ENCODE measurements at regions of chr1 and their contacts with region 1.

Region 1: GRCh38 chr1:226723657-226724532 is 15.2 kb downstream of the ITPKB start:
- DNase-seq: no peak

Region 2: DNA sequence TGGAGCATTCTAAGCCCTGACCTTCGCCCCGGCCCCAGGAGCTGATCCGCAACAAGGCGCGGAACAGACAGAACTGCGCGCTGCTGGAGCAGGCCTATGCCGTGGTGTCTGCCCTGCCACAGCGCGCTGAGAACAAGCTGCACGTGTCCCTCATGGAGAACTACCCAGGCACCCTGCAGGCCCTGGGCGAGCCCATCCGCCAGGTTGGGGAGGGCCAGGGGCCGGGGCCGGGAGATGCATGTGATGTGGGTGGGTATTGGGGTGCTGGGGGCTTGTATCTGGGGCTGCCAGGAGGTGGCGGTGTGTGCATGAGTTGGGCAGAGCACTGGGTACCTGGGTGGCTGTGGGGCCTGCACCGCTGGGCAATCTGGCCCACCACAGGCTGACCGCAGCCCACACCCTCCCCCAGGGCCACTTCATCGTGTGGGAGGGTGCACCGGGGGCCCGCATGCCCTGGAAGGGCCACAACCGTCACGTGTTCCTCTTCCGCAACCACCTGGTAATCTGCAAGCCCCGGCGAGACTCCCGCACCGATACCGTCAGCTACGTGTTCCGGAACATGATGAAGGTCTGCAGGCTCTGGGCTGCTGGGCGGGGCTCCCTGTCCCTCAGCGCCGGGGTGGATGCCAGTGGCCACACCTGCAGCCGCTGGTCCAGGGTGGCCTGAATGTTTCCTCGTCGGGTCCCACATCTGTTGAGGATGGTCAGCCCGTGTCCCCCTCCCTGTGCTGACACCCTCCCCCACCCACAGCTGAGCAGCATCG is 1617.0 kb after region 1 on chr1:
- intact Hi-C with region 1: loop called in 1 of 2 experiments (anchors 5 kb)
- DNase-seq: peak; percentile 79

Measured in posterior vena cava (tissue), 2 donors.